Ascending aorta (tissue), 2 donors: ENCODE measurements at regions of chr2 and their contacts with region 1.

Region 1: GRCh38 chr2:107290041-107290440 is 404.1 kb upstream of the ST6GAL2 start:
- DNase-seq: no peak
- H3K4me3 ChIP-seq: no peak overlapping the region
- H3K27ac ChIP-seq: no peak overlapping the region
- H3K4me1 ChIP-seq: no peaks in the 10 kb centered on the region
- H3K27me3 ChIP-seq: no peaks in the 10 kb centered on the region
- CTCF ChIP-seq: no peak

Region 2: GRCh38 chr2:106664669-106665068 is 625.4 kb before region 1 on chr2:
- intact Hi-C with region 1: loop called (anchors 10 kb)
- DNase-seq: no peak
- H3K4me3 ChIP-seq: no peak overlapping the region
- H3K27ac ChIP-seq: no peak overlapping the region
- H3K4me1 ChIP-seq: no peaks in the 10 kb centered on the region
- H3K27me3 ChIP-seq: no peaks in the 10 kb centered on the region
- CTCF ChIP-seq: no peak